ENCODE measurements at regions of chr9 and their contacts with region 1.

Region 1: DNA sequence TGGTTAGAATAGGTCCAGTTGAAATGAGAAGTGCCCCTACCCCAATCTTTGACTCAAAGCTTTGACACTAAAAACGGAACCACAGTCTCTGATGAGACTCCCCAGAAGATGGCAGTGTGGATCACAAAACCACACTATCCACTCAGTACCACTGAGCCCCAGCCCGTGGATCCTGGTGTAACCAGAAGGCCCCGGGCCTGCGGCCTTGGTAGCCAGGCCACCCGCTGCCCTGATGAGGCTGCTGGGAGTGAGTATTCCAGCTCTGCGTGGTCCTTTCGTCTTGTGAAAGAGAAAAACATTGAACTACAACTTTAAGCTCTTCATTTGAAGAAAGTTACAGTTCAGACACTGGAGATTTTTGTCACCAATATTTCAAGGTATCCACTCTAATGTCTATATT is 42.2 kb upstream of the FBP1 start:
- DNase-seq: peak; percentile 64
- H3K4me3 ChIP-seq: no peak overlapping the region
- H3K27ac ChIP-seq: peak overlapping the region; percentile 36
- H3K4me1 ChIP-seq: peaks cover 8% of the 10 kb centered on the region
- H3K27me3 ChIP-seq: no peaks in the 10 kb centered on the region
- CTCF ChIP-seq: peak; percentile 86

Region 2: GRCh38 chr9:93843396-93843795 is 838.1 kb before region 1 on chr9:
- intact Hi-C with region 1: no loop called
- DNase-seq: no peak
- H3K4me3 ChIP-seq: no peak overlapping the region
- H3K27ac ChIP-seq: no peak overlapping the region
- H3K4me1 ChIP-seq: no peaks in the 10 kb centered on the region
- H3K27me3 ChIP-seq: peaks cover 42% of the 10 kb centered on the region
- CTCF ChIP-seq: no peak

Region 3: GRCh38 chr9:94772639-94773303 is 91.3 kb after region 1 on chr9:
- intact Hi-C with region 1: loop called (anchors 10 kb)
- DNase-seq: no peak
- H3K4me3 ChIP-seq: no peak overlapping the region
- H3K27ac ChIP-seq: no peak overlapping the region
- H3K4me1 ChIP-seq: no peaks in the 10 kb centered on the region
- H3K27me3 ChIP-seq: no peaks in the 10 kb centered on the region
- CTCF ChIP-seq: no peak

Region 4: GRCh38 chr9:95103385-95103784 is 421.9 kb after region 1 on chr9:
- intact Hi-C with region 1: no loop called
- DNase-seq: peak; percentile 58
- H3K4me3 ChIP-seq: no peak overlapping the region
- H3K27ac ChIP-seq: peak overlapping the region; percentile 57
- H3K4me1 ChIP-seq: peaks cover 71% of the 10 kb centered on the region
- H3K27me3 ChIP-seq: no peaks in the 10 kb centered on the region
- CTCF ChIP-seq: no peak

Region 5: DNA sequence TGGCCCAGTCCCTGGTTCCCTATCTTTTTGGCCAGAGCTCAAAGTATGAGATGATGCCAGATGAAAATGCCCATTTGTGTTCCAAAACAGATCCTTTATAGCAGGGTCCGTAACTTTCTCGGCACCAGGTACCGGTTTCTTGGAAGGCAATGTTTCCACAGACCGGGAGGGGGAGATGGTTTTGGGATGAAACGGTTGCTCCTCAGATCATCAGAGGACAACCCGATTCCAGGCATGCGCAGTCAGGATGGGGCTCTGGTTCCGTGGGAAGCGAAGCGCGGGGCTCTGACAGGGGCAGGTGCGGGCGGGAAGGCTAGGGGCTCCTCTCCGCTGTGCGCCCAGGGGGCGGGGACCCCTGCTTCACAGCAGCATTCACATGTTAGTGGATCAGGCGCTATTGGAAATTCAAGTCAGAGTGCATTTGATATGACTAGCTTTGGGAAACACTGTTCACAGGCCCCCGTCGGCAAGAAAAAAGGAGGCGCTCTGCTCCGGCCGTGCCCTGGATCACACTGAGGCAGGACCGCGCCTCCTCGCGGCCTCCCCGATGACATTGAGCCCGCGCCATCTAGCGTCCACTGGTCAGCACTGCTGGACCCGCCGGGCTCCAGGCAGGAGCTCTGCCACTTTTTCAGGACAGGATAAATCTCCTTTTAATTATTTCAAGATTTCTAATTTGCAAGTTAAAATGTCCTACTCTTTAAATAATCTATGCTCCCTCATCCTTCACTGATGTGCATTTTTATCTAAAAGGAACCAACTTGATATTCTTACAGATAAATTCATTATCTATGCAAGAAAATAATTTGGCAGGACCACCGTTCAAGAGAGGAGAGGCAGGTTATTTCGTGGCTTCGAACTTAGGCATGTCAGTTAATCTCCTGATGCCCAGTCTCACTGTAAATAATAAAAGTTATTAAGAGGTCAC is 446.0 kb after region 1 on chr9:
- intact Hi-C with region 1: loop called (anchors 2 kb)
- DNase-seq: peak; percentile 86
- H3K4me3 ChIP-seq: peak overlapping the region; percentile 64
- H3K27ac ChIP-seq: no peak overlapping the region
- H3K4me1 ChIP-seq: peaks cover 18% of the 10 kb centered on the region
- H3K27me3 ChIP-seq: no peaks in the 10 kb centered on the region
- CTCF ChIP-seq: peak; percentile 99

Measured in left ventricle myocardium inferior (tissue), 1 donor.